ENCODE measurements at regions of chr2 and their contacts with region 1.

Region 1: GRCh38 chr2:98771721-98772524 is 41.0 kb upstream of the MGAT4A start:
- H3K4me3 Mint-ChIP-seq: peak overlapping the region; percentile 81
- H3K27ac Mint-ChIP-seq: peak overlapping the region; percentile 91
- H3K4me1 Mint-ChIP-seq: peaks cover 90% of the 10 kb centered on the region
- H3K27me3 Mint-ChIP-seq: no peaks in the 10 kb centered on the region

Region 2: GRCh38 chr2:98702127-98702802 is 69.7 kb before region 1 on chr2:
- intact Hi-C with region 1: no loop called
- H3K4me3 Mint-ChIP-seq: no peak overlapping the region
- H3K27ac Mint-ChIP-seq: peak overlapping the region; percentile 41
- H3K4me1 Mint-ChIP-seq: peaks cover 55% of the 10 kb centered on the region
- H3K27me3 Mint-ChIP-seq: no peaks in the 10 kb centered on the region

Region 3: DNA sequence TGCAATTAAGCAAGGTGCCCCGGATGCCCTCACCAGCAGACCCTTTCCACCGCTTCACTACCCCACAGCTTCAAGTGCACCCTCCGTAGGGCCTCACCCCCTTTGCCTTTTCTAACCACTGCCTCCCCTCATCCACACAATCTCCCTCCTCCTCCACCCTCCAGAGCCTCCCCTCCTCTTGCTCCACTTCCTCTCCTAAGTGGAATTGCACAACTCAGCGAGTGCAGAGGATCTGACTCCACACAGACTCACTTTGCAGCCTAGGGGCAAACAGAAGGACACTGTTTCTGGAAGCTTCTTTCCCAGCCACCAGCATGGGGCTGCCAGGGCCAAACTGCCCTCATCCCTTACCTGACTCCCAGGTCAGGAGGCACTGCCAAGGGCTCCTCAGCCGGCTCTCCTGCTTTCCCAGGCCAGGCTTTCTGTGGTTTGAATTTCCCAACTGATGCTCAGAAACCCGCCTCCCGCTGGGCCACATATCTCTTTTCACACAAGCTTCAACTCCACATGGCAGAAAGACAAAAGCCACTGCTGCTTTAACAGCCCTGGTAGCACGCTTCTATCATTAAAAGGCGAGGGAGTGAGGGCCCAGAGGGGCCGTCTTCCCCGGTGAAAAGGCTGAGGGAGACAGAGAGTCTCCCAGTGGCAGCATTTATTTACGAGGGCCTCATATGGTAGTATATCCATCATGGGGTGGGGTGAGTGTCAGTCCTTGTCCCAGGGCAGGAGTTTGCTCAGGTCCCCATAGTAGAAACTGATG is 33.7 kb after region 1 on chr2:
- intact Hi-C with region 1: loop called (anchors 5 kb)
- H3K4me3 Mint-ChIP-seq: no peak overlapping the region
- H3K27ac Mint-ChIP-seq: peak overlapping the region; percentile 67
- H3K4me1 Mint-ChIP-seq: peaks cover 63% of the 10 kb centered on the region
- H3K27me3 Mint-ChIP-seq: peaks cover 1% of the 10 kb centered on the region

Region 4: GRCh38 chr2:98822301-98823164 is 50.6 kb after region 1 on chr2:
- intact Hi-C with region 1: loop called (anchors 5 kb)
- H3K4me3 Mint-ChIP-seq: peak overlapping the region; percentile 79
- H3K27ac Mint-ChIP-seq: peak overlapping the region; percentile 89
- H3K4me1 Mint-ChIP-seq: peaks cover 54% of the 10 kb centered on the region
- H3K27me3 Mint-ChIP-seq: peaks cover 6% of the 10 kb centered on the region

Region 5: GRCh38 chr2:99217929-99218501 is 446.1 kb after region 1 on chr2:
- intact Hi-C with region 1: no loop called
- H3K4me3 Mint-ChIP-seq: no peak overlapping the region
- H3K27ac Mint-ChIP-seq: no peak overlapping the region
- H3K4me1 Mint-ChIP-seq: no peaks in the 10 kb centered on the region
- H3K27me3 Mint-ChIP-seq: no peaks in the 10 kb centered on the region